PC-3 (cell line): ENCODE measurements at regions of chr10 and their contacts with region 1.

Region 1: DNA sequence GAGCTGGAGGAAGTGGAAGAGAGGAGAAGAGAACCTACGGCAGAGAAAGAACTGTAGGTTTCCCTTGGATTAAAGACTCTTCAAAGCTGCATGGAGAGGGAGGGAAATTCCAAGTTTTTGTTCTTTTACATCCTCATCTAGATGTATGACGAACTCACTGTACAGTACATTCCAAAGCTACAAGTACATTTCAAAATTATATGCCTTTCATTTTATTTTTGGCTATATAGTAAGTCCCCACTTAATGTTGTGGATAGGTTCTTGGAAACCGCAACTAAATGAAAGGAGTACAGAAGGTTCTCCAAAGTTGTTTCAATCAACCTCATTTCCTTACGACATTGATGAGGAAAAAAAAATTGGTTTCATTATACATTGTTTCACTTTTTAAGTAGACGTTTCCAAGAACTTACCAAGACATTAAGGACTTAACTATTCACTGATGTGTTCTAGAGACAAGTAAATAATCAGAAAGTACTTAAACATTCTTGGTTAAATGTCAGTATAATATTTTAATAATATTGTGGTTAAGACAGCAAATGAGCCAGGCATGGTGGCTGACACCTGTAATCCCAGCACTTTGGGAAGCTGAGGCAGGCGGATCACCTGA is 16.1 kb upstream of the JMJD1C start:
- DNase-seq: no peak
- ATAC-seq: no peak
- H3K4me3 ChIP-seq: no peak overlapping the region
- H3K27ac ChIP-seq: no peak overlapping the region
- H3K4me1 ChIP-seq: no peaks in the 10 kb centered on the region
- H3K27me3 ChIP-seq: no peaks in the 10 kb centered on the region
- CTCF ChIP-seq: no peak

Region 2: GRCh38 chr10:63515002-63515763 is 33.3 kb after region 1 on chr10:
- CTCF ChIA-PET with region 1: interaction called, 3 read pairs
- POLR2A ChIA-PET with region 1: interaction called, 4 read pairs
- intact Hi-C with region 1: loop called (anchors 5 kb)
- DNase-seq: peak; percentile 89
- ATAC-seq: peak; percentile 54
- H3K4me3 ChIP-seq: peak overlapping the region; percentile 16; the same call in 1 of the 2 replicates
- H3K27ac ChIP-seq: peak overlapping the region; percentile 41
- H3K4me1 ChIP-seq: peaks cover 56% of the 10 kb centered on the region
- H3K27me3 ChIP-seq: no peaks in the 10 kb centered on the region
- CTCF ChIP-seq: no peak